ENCODE measurements at regions of chr1 and their contacts with region 1.

Region 1: GRCh38 chr1:167454894-167455785 is 63.2 kb downstream of the CD247 start:
- DNase-seq: peak; percentile 65 to 93 (median 83)
- ATAC-seq: peak; percentile 63
- H3K4me3 ChIP-seq: peak overlapping the region; percentile 56 to 89
- H3K4me3 Mint-ChIP-seq: peak overlapping the region; percentile 87
- H3K27ac ChIP-seq: peak overlapping the region; percentile 84 to 91
- H3K27ac Mint-ChIP-seq: peak overlapping the region; percentile 96
- H3K4me1 ChIP-seq: peaks cover 68% of the 10 kb centered on the region
- H3K4me1 Mint-ChIP-seq: peaks cover 74% of the 10 kb centered on the region
- H3K27me3 ChIP-seq: no peaks in the 10 kb centered on the region
- H3K27me3 Mint-ChIP-seq: no peaks in the 10 kb centered on the region
- CTCF ChIP-seq: no peak

Region 2: DNA sequence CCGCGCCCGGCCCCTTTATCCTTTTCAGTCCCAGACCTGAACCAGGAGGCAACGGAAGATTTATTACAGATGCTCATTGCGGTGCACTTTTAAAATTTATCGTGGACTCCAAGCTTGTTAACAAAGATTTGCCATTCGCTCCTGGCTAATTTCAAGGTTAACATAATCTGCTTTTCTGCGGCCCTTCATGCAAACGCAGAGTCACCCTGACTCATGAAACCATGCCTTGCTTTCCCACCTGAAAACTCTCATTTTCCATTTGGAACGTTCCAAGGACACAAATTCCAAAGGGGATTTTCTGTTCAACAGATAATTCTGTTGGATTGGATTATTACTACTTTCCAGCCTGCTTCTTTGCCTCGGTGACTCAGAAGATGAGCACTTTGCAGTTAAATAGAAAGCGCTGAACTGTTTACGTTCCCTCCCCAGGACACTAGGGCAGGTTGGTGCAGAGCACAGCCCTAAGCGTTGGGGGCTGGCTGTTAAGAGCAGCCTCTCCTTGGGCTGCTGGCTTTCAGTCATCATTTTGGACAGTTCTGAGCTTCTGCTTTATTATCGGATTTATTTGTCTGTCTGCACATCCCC is 12.1 kb after region 1 on chr1:
- CTCF ChIA-PET with region 1: interaction called, 13 read pairs
- POLR2A ChIA-PET with region 1: interaction called, 7 read pairs
- intact Hi-C with region 1: loop called in 1 of 2 experiments (anchors 2 kb)
- DNase-seq: no peak
- ATAC-seq: no peak
- H3K4me3 ChIP-seq: no peak overlapping the region
- H3K4me3 Mint-ChIP-seq: no peak overlapping the region
- H3K27ac ChIP-seq: peak overlapping the region in 1 of 2 experiments; percentile 46
- H3K27ac Mint-ChIP-seq: peak overlapping the region; percentile 55
- H3K4me1 ChIP-seq: peaks cover 72% of the 10 kb centered on the region
- H3K4me1 Mint-ChIP-seq: peaks cover 86% of the 10 kb centered on the region
- H3K27me3 ChIP-seq: no peaks in the 10 kb centered on the region
- H3K27me3 Mint-ChIP-seq: no peaks in the 10 kb centered on the region
- CTCF ChIP-seq: no peak

Region 3: DNA sequence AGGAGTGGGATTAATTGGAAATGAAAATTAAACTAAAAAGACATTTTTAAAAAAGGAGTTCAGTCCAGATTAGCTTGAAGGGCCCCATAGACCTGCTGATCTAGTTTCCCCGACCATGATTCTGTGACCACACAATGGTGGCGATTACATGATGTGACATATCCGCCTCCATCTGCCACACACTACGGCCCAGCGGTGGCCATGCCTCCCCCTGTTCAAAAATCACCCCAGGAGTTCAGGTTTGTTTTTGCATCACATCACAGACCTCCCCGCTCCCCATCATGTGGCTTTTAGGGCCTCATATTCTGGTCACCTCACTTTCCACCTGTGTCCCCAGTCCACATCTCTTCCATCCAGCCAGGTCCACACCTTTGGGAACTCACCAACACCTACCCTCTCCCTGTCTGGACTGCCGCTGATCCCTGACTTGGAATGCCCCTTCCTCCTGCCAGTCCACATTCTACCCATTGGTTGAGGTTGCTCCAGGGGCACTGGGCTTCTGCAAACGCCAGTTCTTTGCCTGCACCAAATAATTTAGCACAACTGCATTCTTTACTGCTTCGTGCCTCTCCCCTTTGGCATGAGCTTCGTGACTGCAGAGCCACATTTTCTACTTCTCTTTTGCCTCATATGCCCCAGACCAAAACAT is 24.3 kb after region 1 on chr1:
- CTCF ChIA-PET with region 1: interaction called, 11 read pairs
- POLR2A ChIA-PET with region 1: interaction called, 17 read pairs
- intact Hi-C with region 1: no loop called
- DNase-seq: peak in 3 of 9 experiments; percentile 32 to 62 (median 54)
- ATAC-seq: no peak
- H3K4me3 ChIP-seq: no peak overlapping the region
- H3K4me3 Mint-ChIP-seq: peak overlapping the region; percentile 61
- H3K27ac ChIP-seq: peak overlapping the region in 1 of 2 experiments; percentile 39
- H3K27ac Mint-ChIP-seq: peak overlapping the region; percentile 91
- H3K4me1 ChIP-seq: peaks cover 85% of the 10 kb centered on the region
- H3K4me1 Mint-ChIP-seq: peaks cover 94% of the 10 kb centered on the region
- H3K27me3 ChIP-seq: no peaks in the 10 kb centered on the region
- H3K27me3 Mint-ChIP-seq: no peaks in the 10 kb centered on the region
- CTCF ChIP-seq: no peak

Region 4: DNA sequence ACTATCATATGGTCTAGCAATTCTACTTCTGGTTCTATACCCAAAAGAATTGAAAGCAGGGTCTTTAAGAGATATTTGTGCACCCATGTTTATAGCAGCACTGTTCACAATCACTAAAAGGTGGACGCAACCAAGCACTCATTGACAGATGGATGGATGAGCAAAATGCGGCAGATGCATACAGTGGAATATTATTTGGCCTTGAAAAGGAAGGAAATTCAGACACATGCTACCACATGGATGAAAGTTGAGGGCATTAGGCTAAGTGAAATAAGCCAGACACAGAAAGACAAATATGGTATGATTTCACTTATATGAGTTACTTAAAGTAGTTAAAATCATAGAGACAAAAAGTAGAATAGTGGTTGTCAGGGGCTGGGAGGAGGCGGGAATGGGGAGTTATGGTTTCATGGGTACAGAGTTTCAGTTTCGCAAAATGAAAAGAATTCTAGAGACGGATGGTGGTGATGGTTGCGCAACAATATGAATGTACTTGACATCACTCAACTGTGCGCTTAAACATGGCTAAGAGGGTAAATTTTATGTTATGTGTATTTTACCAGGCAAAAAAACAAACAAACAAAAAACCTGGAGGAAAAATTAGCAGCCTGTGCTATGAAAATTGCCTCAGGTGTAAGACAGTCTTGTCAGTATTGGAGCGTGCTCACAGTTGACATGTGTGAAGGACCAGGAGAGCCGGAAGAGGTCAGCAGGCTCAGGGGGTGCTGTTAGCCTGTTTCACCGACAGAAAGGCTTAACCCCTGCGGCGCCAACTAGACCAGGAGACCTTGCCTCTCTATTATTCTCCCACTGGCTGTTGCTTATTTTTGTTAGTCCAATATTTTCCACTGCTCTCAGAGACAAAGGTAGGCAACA is 36.7 kb after region 1 on chr1:
- CTCF ChIA-PET with region 1: no interaction called
- POLR2A ChIA-PET with region 1: interaction called, 6 read pairs
- intact Hi-C with region 1: loop called (anchors 2 kb)
- DNase-seq: peak in 5 of 9 experiments; percentile 22 to 80 (median 53)
- ATAC-seq: peak; percentile 17
- H3K4me3 ChIP-seq: peak overlapping the region in 1 of 2 experiments; percentile 18
- H3K4me3 Mint-ChIP-seq: peak overlapping the region; percentile 68
- H3K27ac ChIP-seq: peak overlapping the region; percentile 30 to 86
- H3K27ac Mint-ChIP-seq: peak overlapping the region; percentile 95
- H3K4me1 ChIP-seq: peaks cover 95% of the 10 kb centered on the region
- H3K4me1 Mint-ChIP-seq: peaks cover 90% of the 10 kb centered on the region
- H3K27me3 ChIP-seq: no peaks in the 10 kb centered on the region
- H3K27me3 Mint-ChIP-seq: no peaks in the 10 kb centered on the region
- CTCF ChIP-seq: no peak

Region 5: GRCh38 chr1:167627865-167628641 is 172.9 kb after region 1 on chr1:
- CTCF ChIA-PET with region 1: no interaction called
- POLR2A ChIA-PET with region 1: interaction called, 3 read pairs
- intact Hi-C with region 1: loop called in 1 of 2 experiments (anchors 10 kb)
- DNase-seq: peak; percentile 44 to 91 (median 73)
- ATAC-seq: peak; percentile 67
- H3K4me3 ChIP-seq: peak overlapping the region; percentile 28 to 96
- H3K4me3 Mint-ChIP-seq: peak overlapping the region; percentile 89
- H3K27ac ChIP-seq: peak overlapping the region; percentile 46 to 94
- H3K27ac Mint-ChIP-seq: peak overlapping the region; percentile 96
- H3K4me1 ChIP-seq: peaks cover 50% of the 10 kb centered on the region
- H3K4me1 Mint-ChIP-seq: peaks cover 63% of the 10 kb centered on the region
- H3K27me3 ChIP-seq: no peaks in the 10 kb centered on the region
- H3K27me3 Mint-ChIP-seq: no peaks in the 10 kb centered on the region
- CTCF ChIP-seq: no peak

Measured in CD8-positive, alpha-beta T cell (primary cell).